Mucosa of descending colon (tissue), 3 donors: ENCODE measurements at regions of chr1 and their contacts with region 1.

Region 1: DNA sequence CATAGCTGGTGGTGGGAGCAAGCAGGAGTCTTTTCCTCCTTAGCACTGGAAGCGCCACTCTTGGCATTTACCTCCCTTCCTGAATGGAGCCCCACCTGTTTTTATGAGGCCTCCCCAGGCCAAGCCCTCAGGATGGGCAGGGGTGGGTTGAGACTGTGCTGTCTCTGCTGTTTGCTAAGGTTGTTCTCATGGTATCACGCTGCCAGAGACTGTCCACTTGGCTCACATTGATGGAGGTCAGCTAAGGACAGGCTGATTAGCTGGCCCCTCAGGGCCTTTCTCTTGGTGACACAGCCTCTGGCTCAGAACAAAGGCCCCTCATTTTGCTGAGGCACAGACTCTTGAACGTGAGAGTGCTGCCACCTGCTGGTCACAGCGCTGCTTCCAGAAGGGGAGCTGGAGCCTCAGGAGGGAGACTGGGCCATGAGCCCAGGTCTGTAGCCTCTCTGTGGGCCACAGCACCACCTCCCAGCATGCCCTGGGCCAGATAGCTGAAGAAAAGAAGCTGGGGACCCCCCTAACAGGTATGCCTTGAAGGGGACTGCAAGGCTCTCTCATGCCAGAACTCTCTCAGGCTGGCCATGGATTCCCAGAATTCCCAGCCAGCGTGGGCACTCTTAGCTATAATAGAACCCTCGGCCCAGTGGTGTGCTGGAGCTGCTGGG is 85.6 kb downstream of the CD58 start:
- DNase-seq: peak; percentile 90 to 97 (median 94)
- ATAC-seq: peak; percentile 76
- H3K4me3 ChIP-seq: no peak overlapping the region
- H3K4me1 ChIP-seq: peaks cover 34% of the 10 kb centered on the region
- CTCF ChIP-seq: peak; percentile 62

Region 2: GRCh38 chr1:116147972-116148371 is 337.2 kb before region 1 on chr1:
- intact Hi-C with region 1: loop called in 1 of 2 experiments (anchors 5 kb)
- DNase-seq: no peak
- ATAC-seq: no peak
- H3K4me3 ChIP-seq: no peak overlapping the region
- H3K4me1 ChIP-seq: peaks cover 15% of the 10 kb centered on the region
- CTCF ChIP-seq: no peak

Region 3: GRCh38 chr1:116257341-116257767 is 227.8 kb before region 1 on chr1:
- intact Hi-C with region 1: no loop called
- DNase-seq: no peak
- ATAC-seq: peak; percentile 60
- H3K4me3 ChIP-seq: no peak overlapping the region
- H3K4me1 ChIP-seq: peaks cover 52% of the 10 kb centered on the region
- CTCF ChIP-seq: no peak

Region 4: GRCh38 chr1:116321766-116322175 is 163.4 kb before region 1 on chr1:
- intact Hi-C with region 1: loop called in 1 of 2 experiments (anchors 5 kb)
- DNase-seq: peak in 1 of 3 donors; percentile 45
- ATAC-seq: peak; percentile 48
- H3K4me3 ChIP-seq: no peak overlapping the region
- H3K4me1 ChIP-seq: peaks cover 46% of the 10 kb centered on the region
- CTCF ChIP-seq: no peak

Region 5: GRCh38 chr1:116360429-116361173 is 124.6 kb before region 1 on chr1:
- intact Hi-C with region 1: loop called (anchors 10 kb)
- DNase-seq: peak in 1 of 3 donors; percentile 37
- ATAC-seq: peak; percentile 57
- H3K4me3 ChIP-seq: no peak overlapping the region
- H3K4me1 ChIP-seq: no peaks in the 10 kb centered on the region
- CTCF ChIP-seq: no peak

Region 6: DNA sequence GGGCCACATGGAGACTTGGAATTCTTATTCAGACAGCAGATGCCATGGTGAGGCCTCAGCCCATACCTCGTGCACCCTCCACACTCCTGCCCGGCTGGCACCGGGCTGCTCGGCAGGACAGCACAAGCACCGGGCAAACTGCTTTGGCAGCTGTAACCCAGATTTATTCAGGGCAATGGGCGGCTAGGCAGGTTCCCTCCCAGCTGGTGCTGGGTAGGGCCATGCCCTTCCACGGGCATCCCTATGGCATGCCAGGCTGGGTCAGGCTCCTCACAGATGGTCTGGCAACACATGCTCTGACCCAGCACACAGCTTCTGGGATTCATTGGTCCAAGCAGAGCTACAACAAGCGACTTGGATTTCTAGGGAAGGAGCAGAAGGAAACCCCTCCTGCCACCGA is 58.8 kb before region 1 on chr1:
- intact Hi-C with region 1: no loop called
- DNase-seq: no peak
- ATAC-seq: no peak
- H3K4me3 ChIP-seq: no peak overlapping the region
- H3K4me1 ChIP-seq: no peaks in the 10 kb centered on the region
- CTCF ChIP-seq: no peak